OCI-LY7 (cell line): ENCODE measurements at regions of chr10 and their contacts with region 1.

Region 1: GRCh38 chr10:17687117-17687831 is 43.3 kb downstream of the STAM start:
- DNase-seq: no peak
- H3K4me3 ChIP-seq: no peak overlapping the region
- H3K27ac ChIP-seq: no peak overlapping the region
- H3K4me1 ChIP-seq: no peaks in the 10 kb centered on the region
- CTCF ChIP-seq: no peak

Region 2: DNA sequence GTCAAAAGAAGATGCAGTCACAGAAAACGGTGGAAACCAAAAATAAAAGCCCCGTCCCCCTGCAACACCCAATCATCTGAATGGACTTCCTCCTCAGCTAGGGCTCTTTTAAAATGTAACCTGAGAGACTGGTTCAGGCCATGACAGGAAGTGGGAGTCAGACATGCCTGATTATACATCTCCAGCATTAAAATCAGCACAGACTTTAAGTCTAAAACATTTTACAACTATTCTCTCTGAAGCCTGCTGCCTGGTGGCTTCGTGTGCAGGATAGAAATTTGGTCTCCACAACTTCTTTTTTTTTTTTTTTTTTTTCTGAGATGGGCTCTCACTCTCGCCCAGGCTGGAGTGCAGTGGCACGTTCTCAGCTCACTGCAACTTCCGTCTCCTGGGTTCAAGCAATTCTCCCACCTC is 100.4 kb before region 1 on chr10:
- CTCF ChIA-PET with region 1: no interaction called
- POLR2A ChIA-PET with region 1: interaction called, 10 read pairs
- intact Hi-C with region 1: no loop called
- DNase-seq: peak; percentile 29
- H3K4me3 ChIP-seq: no peak overlapping the region
- H3K27ac ChIP-seq: no peak overlapping the region
- H3K4me1 ChIP-seq: no peaks in the 10 kb centered on the region
- CTCF ChIP-seq: no peak

Region 3: DNA sequence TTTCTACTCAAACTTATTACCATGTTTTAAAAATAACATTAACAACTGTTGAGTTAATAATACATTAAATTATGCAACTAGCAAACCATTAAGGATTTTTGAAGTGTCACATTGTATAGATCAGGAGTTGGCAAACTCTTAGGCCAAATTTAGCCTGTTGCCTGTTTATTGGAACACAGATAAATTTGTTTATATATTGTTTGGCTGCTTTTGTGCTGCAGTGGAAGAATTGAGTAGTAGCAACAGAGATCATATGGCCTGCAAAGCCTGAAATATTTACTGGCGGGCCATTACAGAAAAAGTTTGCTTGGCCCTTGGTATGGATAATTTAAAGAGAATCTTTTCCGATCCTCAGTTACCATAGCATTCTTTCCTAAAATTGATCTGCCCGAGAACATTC is 14.0 kb after region 1 on chr10:
- CTCF ChIA-PET with region 1: no interaction called
- POLR2A ChIA-PET with region 1: interaction called, 13 read pairs
- intact Hi-C with region 1: no loop called
- DNase-seq: no peak
- H3K4me3 ChIP-seq: no peak overlapping the region
- H3K27ac ChIP-seq: no peak overlapping the region
- H3K4me1 ChIP-seq: no peaks in the 10 kb centered on the region
- CTCF ChIP-seq: no peak